ENCODE measurements at regions of chr17 and their contacts with region 1.

Region 1: DNA sequence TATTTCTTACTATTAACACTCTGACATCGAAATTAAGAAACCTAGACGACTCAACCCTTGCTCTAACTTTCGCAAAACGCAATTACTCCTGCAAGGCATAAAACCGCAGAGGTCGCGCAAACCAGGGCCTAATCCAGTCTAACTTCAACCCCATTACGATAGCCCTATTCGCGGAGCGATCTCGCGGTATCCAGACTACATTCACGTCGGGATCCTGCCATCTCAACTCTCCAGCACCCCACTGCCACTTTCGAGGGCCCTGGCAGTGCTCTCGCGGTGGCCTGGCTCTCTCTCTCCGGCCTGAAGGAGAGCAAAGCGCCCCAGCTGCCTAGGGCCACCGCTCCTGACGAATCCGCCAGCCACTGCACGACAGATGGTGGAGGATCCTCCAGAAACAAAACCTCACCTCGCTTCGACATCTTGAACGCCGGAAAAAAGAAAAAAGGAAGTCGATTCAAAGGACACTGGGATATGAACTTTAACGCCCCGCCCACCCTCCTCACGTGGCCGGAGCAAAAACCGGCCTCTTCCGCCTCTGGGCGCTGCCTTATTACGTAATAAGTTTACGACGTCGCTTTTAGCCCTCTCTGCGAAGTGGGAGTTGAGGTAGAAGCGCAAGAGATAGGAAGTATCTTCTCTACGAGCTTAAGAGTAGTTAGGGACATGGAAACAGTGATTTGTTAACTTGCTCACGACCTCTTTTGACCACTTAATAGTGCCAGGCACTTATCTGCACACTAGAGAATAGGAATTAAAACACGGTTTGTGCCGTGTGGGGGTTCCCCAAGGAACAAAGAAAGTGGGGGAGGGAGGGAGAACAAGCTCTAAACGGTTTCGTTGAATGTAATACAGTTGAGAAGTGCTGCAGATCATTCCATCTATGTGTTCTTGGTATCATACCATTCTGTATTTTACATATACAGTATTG is at the start of gene RPL23:
- DNase-seq: peak; percentile 84 to 99 (median 91)

Region 2: GRCh38 chr17:38824899-38825761 is 28.4 kb before region 1 on chr17 and contains the start of gene CWC25:
- intact Hi-C with region 1: loop called (anchors 1 kb)
- DNase-seq: peak; percentile 85 to 99 (median 93)

Region 3: GRCh38 chr17:38869526-38870258 is 16.1 kb after region 1 on chr17 and contains the start of gene LASP1:
- intact Hi-C with region 1: loop called (anchors 1 kb)
- DNase-seq: peak; percentile 77 to 98 (median 86)